ENCODE measurements at regions of chr22 and their contacts with region 1.

Region 1: GRCh38 chr22:39532215-39533071 is at the start of gene RPS19BP1:
- DNase-seq: peak; percentile 100
- H3K4me3 Mint-ChIP-seq: peak within 1 kb of the TSS; percentile 97
- H3K27ac Mint-ChIP-seq: peak within 1 kb of the TSS; percentile 87
- H3K4me1 Mint-ChIP-seq: peaks cover 44% of the 10 kb centered on the region
- H3K27me3 Mint-ChIP-seq: no peaks in the 10 kb centered on the region
- CTCF ChIP-seq: no peak
- total RNA-seq, gene RPS19BP1: 104 and 106 TPM in 2 replicates

Region 2: DNA sequence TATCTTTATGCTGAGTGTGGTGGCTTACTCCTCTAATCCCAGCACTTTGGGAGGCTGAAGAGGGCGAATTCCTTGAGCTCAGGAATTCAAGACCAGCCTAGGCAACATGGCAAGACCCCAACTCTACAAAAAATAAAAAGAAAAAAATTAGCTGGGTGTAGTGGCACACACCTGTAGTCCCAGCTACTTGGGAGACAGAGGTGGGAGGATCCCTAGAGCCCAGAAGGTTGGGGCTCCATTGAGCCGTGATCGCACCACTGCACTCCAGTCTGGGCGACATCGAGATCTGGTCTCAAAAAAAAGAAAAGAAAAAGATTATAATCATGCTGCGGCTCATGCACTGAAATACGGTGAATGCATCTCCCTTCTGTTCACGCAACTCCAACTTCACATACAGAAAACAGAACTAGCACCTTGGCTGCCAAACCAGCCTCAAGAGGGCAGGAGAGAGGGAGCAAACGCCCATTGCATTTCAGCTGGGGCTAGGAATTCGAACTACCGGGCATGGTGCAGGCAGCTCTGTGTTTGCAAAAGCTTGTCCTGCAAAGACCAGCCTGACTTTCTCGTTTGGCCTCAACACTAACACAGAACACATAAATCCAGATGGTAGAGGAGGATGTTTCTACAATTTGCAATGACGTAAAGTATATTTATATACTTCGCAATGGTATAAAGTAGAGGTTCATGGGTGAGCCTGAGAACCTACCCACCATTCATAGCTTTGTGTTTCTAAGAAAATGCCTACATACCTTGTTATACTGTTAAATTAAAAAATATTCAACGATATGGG is 189.0 kb before region 1 on chr22:
- CTCF ChIA-PET with region 1: no interaction called
- POLR2A ChIA-PET with region 1: no interaction called
- intact Hi-C with region 1: no loop called
- DNase-seq: peak; percentile 68
- H3K4me3 Mint-ChIP-seq: no peak overlapping the region
- H3K27ac Mint-ChIP-seq: no peak overlapping the region
- H3K4me1 Mint-ChIP-seq: peaks cover 4% of the 10 kb centered on the region
- H3K27me3 Mint-ChIP-seq: peaks cover 26% of the 10 kb centered on the region
- CTCF ChIP-seq: peak; percentile 64

Region 3: GRCh38 chr22:39490135-39490798 is 42.2 kb before region 1 on chr22:
- CTCF ChIA-PET with region 1: interaction called, 66 read pairs
- POLR2A ChIA-PET with region 1: interaction called, 3 read pairs
- intact Hi-C with region 1: loop called (anchors 1 kb)
- DNase-seq: peak; percentile 86
- H3K4me3 Mint-ChIP-seq: no peak overlapping the region
- H3K27ac Mint-ChIP-seq: no peak overlapping the region
- H3K4me1 Mint-ChIP-seq: no peaks in the 10 kb centered on the region
- H3K27me3 Mint-ChIP-seq: no peaks in the 10 kb centered on the region
- CTCF ChIP-seq: no peak

Region 4: GRCh38 chr22:39502109-39502788 is 30.2 kb before region 1 on chr22 and contains the start of gene MIEF1:
- CTCF ChIA-PET with region 1: interaction called, 5 read pairs
- POLR2A ChIA-PET with region 1: interaction called, 17 read pairs
- intact Hi-C with region 1: no loop called
- DNase-seq: peak; percentile 96
- H3K4me3 Mint-ChIP-seq: peak within 1 kb of the TSS; percentile 79
- H3K27ac Mint-ChIP-seq: peak within 1 kb of the TSS; percentile 59
- H3K4me1 Mint-ChIP-seq: peaks cover 24% of the 10 kb centered on the region
- H3K27me3 Mint-ChIP-seq: no peaks in the 10 kb centered on the region
- CTCF ChIP-seq: no peak
- total RNA-seq, gene MIEF1: 37.0 and 40.2 TPM in 2 replicates

Region 5: GRCh38 chr22:39543095-39543494 is 10.7 kb after region 1 on chr22:
- CTCF ChIA-PET with region 1: interaction called, 12 read pairs
- POLR2A ChIA-PET with region 1: interaction called, 3 read pairs
- intact Hi-C with region 1: no loop called
- DNase-seq: no peak
- H3K4me3 Mint-ChIP-seq: no peak overlapping the region
- H3K27ac Mint-ChIP-seq: no peak overlapping the region
- H3K4me1 Mint-ChIP-seq: peaks cover 8% of the 10 kb centered on the region
- H3K27me3 Mint-ChIP-seq: peaks cover 20% of the 10 kb centered on the region
- CTCF ChIP-seq: peak; percentile 30

Region 6: GRCh38 chr22:40024201-40025061 is 492.0 kb after region 1 on chr22:
- CTCF ChIA-PET with region 1: interaction called, 471 read pairs
- POLR2A ChIA-PET with region 1: interaction called, 11 read pairs
- intact Hi-C with region 1: loop called (anchors 2 kb)
- DNase-seq: peak; percentile 73
- H3K4me3 Mint-ChIP-seq: no peak overlapping the region
- H3K27ac Mint-ChIP-seq: no peak overlapping the region
- H3K4me1 Mint-ChIP-seq: peaks cover 7% of the 10 kb centered on the region
- H3K27me3 Mint-ChIP-seq: no peaks in the 10 kb centered on the region
- CTCF ChIP-seq: peak; percentile 93

Region 7: GRCh38 chr22:40177738-40178416 is 645.4 kb after region 1 on chr22 and contains the start of gene TNRC6B:
- CTCF ChIA-PET with region 1: no interaction called
- POLR2A ChIA-PET with region 1: interaction called, 4 read pairs
- intact Hi-C with region 1: loop called (anchors 5 kb)
- DNase-seq: peak; percentile 98
- H3K4me3 Mint-ChIP-seq: peak within 1 kb of the TSS; percentile 67
- H3K27ac Mint-ChIP-seq: peak within 1 kb of the TSS; percentile 80
- H3K4me1 Mint-ChIP-seq: peaks cover 35% of the 10 kb centered on the region
- H3K27me3 Mint-ChIP-seq: no peaks in the 10 kb centered on the region
- CTCF ChIP-seq: no peak
- total RNA-seq, gene TNRC6B: 27.1 and 39.3 TPM in 2 replicates